Activated CD8-positive, alpha-beta T cell treated with anti-CD3 and anti-CD28 coated beads for 36 hours (primary cell): ENCODE measurements at regions of chr12 and their contacts with region 1.

Region 1: DNA sequence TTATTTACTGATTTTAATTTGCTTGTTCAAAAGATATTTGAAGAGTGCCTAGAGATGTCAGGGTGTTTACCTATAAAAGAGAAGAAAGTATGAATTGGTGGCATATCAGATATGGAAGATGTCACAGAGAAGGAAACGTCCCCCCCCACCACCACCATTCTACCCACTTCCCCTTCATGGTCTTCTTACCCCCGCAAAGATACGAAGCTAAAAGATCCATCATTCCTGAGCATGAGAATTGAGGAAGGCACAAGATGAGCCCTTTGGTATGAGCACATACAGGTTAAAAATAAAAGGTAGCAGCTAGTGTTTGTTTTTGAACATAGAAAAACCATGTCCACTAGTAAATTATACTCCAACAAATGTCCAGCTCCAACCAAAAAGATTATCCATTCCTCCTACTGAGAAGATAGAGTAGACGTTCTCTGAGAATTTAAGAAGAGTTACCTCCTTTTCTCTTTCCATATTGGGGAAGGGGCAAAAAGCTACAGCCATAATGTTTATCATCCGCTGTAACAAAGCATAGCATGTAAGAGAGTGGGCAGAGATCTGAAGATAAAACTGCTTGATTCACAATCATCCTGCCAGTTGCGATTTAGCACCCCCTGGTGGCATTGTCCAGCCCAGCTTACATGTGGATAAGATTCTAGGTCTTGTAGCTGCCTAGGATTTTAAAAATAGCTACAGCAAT is 29.1 kb downstream of the NFYB start:
- DNase-seq: peak; percentile 98
- ATAC-seq: peak; percentile 97
- H3K4me3 Mint-ChIP-seq: peak overlapping the region; percentile 6
- H3K27ac Mint-ChIP-seq: peak overlapping the region; percentile 18
- H3K4me1 Mint-ChIP-seq: peaks cover 11% of the 10 kb centered on the region
- H3K27me3 Mint-ChIP-seq: no peaks in the 10 kb centered on the region
- CTCF ChIP-seq: peak; percentile 82

Region 2: GRCh38 chr12:103884316-103884715 is 224.6 kb before region 1 on chr12:
- CTCF ChIA-PET with region 1: interaction called, 37 read pairs
- POLR2A ChIA-PET with region 1: no interaction called
- intact Hi-C with region 1: loop called (anchors 2 kb)
- DNase-seq: peak; percentile 74
- ATAC-seq: peak; percentile 17
- H3K4me3 Mint-ChIP-seq: no peak overlapping the region
- H3K27ac Mint-ChIP-seq: no peak overlapping the region
- H3K4me1 Mint-ChIP-seq: peaks cover 42% of the 10 kb centered on the region
- H3K27me3 Mint-ChIP-seq: no peaks in the 10 kb centered on the region
- CTCF ChIP-seq: peak; percentile 72

Region 3: DNA sequence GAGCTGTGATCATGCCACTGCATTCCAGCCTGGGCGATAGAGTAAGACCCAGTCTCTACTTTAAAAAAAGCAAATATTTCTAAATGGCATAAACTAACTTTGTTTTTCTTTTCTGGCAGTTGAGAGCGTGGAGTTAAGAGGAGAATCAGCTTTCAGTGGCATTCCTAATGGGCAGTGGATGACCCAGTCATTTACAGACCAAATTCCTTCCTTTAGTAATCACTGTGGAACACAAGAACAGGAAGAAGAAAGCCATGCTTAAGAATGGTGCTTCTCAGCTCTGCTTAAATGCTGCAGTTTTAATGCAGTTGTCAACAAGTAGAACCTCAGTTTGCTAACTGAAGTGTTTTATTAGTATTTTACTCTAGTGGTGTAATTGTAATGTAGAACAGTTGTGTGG is 122.1 kb before region 1 on chr12:
- CTCF ChIA-PET with region 1: interaction called, 16 read pairs
- POLR2A ChIA-PET with region 1: no interaction called
- intact Hi-C with region 1: no loop called
- DNase-seq: no peak
- ATAC-seq: no peak
- H3K4me3 Mint-ChIP-seq: no peak overlapping the region
- H3K27ac Mint-ChIP-seq: no peak overlapping the region
- H3K4me1 Mint-ChIP-seq: no peaks in the 10 kb centered on the region
- H3K27me3 Mint-ChIP-seq: no peaks in the 10 kb centered on the region
- CTCF ChIP-seq: no peak

Region 4: GRCh38 chr12:104022786-104023185 is 86.1 kb before region 1 on chr12:
- CTCF ChIA-PET with region 1: no interaction called
- POLR2A ChIA-PET with region 1: no interaction called
- intact Hi-C with region 1: no loop called
- DNase-seq: no peak
- ATAC-seq: no peak
- H3K4me3 Mint-ChIP-seq: no peak overlapping the region
- H3K27ac Mint-ChIP-seq: no peak overlapping the region
- H3K4me1 Mint-ChIP-seq: no peaks in the 10 kb centered on the region
- H3K27me3 Mint-ChIP-seq: peaks cover 10% of the 10 kb centered on the region
- CTCF ChIP-seq: no peak

Region 5: GRCh38 chr12:104057771-104058197 is 51.1 kb before region 1 on chr12:
- CTCF ChIA-PET with region 1: interaction called, 105 read pairs
- POLR2A ChIA-PET with region 1: no interaction called
- intact Hi-C with region 1: loop called (anchors 2 kb)
- DNase-seq: peak; percentile 20
- ATAC-seq: peak; percentile 56
- H3K4me3 Mint-ChIP-seq: no peak overlapping the region
- H3K27ac Mint-ChIP-seq: no peak overlapping the region
- H3K4me1 Mint-ChIP-seq: no peaks in the 10 kb centered on the region
- H3K27me3 Mint-ChIP-seq: peaks cover 14% of the 10 kb centered on the region
- CTCF ChIP-seq: peak; percentile 71

Region 6: GRCh38 chr12:104083769-104084475 is 25.0 kb before region 1 on chr12:
- CTCF ChIA-PET with region 1: interaction called, 21 read pairs
- POLR2A ChIA-PET with region 1: no interaction called
- intact Hi-C with region 1: no loop called
- DNase-seq: peak; percentile 75
- ATAC-seq: peak; percentile 96
- H3K4me3 Mint-ChIP-seq: no peak overlapping the region
- H3K27ac Mint-ChIP-seq: no peak overlapping the region
- H3K4me1 Mint-ChIP-seq: peaks cover 21% of the 10 kb centered on the region
- H3K27me3 Mint-ChIP-seq: no peaks in the 10 kb centered on the region
- CTCF ChIP-seq: no peak

Region 7: DNA sequence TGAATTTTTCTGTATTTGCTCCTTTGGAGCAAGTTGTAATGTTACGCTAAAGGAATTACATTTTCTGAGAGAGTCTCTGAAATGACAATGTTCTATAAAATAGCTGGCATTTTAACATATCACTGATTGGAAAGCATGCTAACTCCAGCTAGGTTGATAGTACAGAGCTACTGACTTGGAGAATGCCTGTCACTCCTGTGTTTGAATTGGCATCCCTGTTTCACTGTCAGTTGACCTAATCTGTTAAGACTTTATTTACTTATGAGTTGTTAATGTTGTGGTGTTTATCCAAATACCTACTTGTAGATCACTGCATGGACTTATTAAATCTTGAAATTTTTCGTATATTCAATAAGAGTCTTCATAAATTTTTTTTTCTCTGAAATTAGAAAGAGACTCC is 10.9 kb before region 1 on chr12:
- CTCF ChIA-PET with region 1: interaction called, 38 read pairs
- POLR2A ChIA-PET with region 1: no interaction called
- intact Hi-C with region 1: no loop called
- DNase-seq: no peak
- ATAC-seq: no peak
- H3K4me3 Mint-ChIP-seq: no peak overlapping the region
- H3K27ac Mint-ChIP-seq: no peak overlapping the region
- H3K4me1 Mint-ChIP-seq: peaks cover 2% of the 10 kb centered on the region
- H3K27me3 Mint-ChIP-seq: no peaks in the 10 kb centered on the region
- CTCF ChIP-seq: no peak

Region 8: DNA sequence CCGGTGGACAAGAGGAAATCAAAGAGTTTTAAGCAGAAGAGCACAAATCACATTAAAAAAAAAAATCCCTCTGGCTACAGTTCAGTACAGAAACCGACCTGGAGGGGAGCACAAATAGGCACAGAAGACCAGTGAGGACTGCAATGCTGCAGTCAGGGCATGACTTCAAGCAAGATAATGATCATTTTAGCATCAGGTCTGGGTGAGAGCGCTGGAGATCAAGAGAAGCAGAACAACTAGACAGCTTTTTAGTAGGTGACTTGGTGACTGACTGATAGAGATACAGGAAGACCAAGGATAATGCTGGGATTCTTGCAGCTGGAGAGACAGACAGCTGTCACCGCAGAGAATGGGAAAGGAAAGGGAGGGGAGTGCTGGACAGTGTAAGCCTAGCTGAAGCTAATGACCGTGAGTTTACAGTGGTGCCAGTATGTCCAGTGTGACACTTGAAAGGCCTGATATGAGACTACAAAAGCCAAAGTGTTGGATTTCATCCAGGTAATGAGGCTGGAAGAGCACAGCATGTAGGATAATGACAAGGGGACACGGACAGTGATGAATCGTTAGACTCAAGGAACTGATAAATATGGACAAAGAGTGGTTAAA is 23.6 kb after region 1 on chr12:
- CTCF ChIA-PET with region 1: interaction called, 18 read pairs
- POLR2A ChIA-PET with region 1: interaction called, 6 read pairs
- intact Hi-C with region 1: no loop called
- DNase-seq: no peak
- ATAC-seq: no peak
- H3K4me3 Mint-ChIP-seq: no peak overlapping the region
- H3K27ac Mint-ChIP-seq: no peak overlapping the region
- H3K4me1 Mint-ChIP-seq: peaks cover 35% of the 10 kb centered on the region
- H3K27me3 Mint-ChIP-seq: no peaks in the 10 kb centered on the region
- CTCF ChIP-seq: no peak

Region 9: DNA sequence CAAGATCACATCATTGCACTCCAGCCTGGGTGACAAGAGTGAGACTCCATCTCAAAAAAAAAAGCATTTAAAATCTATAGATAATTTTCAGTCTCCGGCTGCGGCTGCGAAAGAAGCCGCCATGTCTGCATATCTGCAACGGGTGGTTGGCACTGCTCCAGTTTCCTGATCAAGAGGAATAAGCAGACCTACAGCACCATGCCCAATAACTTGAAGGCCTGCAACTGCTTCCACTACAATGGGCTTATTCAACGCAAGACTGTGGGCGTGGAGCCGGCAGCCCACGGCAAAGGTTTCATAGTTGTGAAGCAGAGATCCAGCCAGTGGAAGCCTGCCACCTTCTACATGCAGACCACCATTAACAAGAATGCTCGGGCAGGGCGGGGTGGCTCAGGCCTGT is 164.0 kb after region 1 on chr12:
- CTCF ChIA-PET with region 1: no interaction called
- POLR2A ChIA-PET with region 1: no interaction called
- intact Hi-C with region 1: no loop called
- DNase-seq: no peak
- ATAC-seq: no peak
- H3K4me3 Mint-ChIP-seq: no peak overlapping the region
- H3K27ac Mint-ChIP-seq: no peak overlapping the region
- H3K4me1 Mint-ChIP-seq: peaks cover 3% of the 10 kb centered on the region
- H3K27me3 Mint-ChIP-seq: no peaks in the 10 kb centered on the region
- CTCF ChIP-seq: no peak